Calu3 (cell line): ENCODE measurements at regions of chr14 and their contacts with region 1.

Region 1: DNA sequence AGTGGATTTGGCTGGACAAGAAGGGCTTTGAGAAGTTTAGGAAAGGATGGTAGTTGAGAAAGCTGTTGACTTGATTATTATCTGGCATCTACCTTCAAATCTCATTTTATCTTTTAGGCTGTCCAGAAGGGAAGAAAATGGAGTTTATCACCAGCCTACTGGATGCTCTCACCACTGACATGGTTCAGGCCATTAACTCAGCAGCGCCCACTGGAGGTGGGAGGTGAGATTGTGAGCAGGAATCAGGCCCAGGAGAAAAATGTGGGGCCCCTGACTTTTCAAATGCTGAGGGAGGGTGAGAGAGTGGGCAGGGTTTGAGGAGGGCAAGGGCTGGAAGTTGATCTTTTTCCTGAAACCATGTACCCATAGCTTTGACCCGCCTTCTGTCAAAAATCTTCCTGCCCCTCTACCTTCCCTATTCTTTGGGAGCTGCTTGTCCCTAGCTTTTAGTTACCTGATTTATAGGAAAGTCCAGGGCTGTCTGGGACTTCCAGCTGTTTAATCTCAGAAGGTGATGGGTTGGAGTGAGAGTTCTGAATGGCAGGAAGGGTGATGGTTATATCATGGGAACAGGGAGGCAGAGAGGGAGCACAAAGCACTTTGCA is 134.2 kb downstream of the SMOC1 start:
- DNase-seq: peak; percentile 73
- H3K4me3 Mint-ChIP-seq: no peak overlapping the region
- H3K27ac Mint-ChIP-seq: peak overlapping the region; percentile 28
- H3K4me1 Mint-ChIP-seq: peaks cover 10% of the 10 kb centered on the region
- H3K27me3 Mint-ChIP-seq: no peaks in the 10 kb centered on the region
- CTCF ChIP-seq: peak; percentile 75

Region 2: DNA sequence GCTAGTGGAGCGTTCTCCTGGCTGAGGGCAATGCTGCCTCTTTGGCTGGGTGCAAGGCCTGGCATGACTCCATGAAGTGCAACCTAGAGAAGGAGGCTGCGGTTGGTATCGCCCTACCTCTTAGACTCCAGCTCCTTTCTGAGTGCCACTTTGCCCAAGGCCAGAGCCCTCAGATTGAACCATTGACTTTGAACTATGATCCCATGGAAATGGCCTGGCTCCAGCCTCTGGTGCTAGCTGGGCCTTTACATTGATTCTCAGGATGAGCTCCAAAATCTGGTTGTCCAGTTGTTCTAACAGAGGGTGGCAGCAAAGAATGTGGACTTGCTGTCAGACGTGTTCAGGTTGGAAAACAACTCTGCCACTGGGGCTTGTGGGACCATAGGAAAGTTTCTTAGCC is 150.3 kb before region 1 on chr14:
- CTCF ChIA-PET with region 1: no interaction called
- intact Hi-C with region 1: no loop called
- DNase-seq: no peak
- H3K4me3 Mint-ChIP-seq: no peak overlapping the region
- H3K27ac Mint-ChIP-seq: no peak overlapping the region
- H3K4me1 Mint-ChIP-seq: no peaks in the 10 kb centered on the region
- H3K27me3 Mint-ChIP-seq: peaks cover 38% of the 10 kb centered on the region
- CTCF ChIP-seq: no peak

Region 3: GRCh38 chr14:69879175-69880043 is 134.0 kb before region 1 on chr14 and contains the start of gene SMOC1:
- CTCF ChIA-PET with region 1: interaction called, 6 read pairs
- intact Hi-C with region 1: loop called (anchors 1 kb)
- DNase-seq: peak; percentile 96
- H3K4me3 Mint-ChIP-seq: peak within 1 kb of the TSS; percentile 79
- H3K27ac Mint-ChIP-seq: peak within 1 kb of the TSS; percentile 22
- H3K4me1 Mint-ChIP-seq: peaks cover 40% of the 10 kb centered on the region
- H3K27me3 Mint-ChIP-seq: no peaks in the 10 kb centered on the region
- CTCF ChIP-seq: no peak
- total RNA-seq, gene SMOC1: 21.4 and 39.6 TPM in 2 replicates

Region 4: GRCh38 chr14:69956970-69957369 is 56.4 kb before region 1 on chr14:
- CTCF ChIA-PET with region 1: no interaction called
- intact Hi-C with region 1: no loop called
- DNase-seq: no peak
- H3K4me3 Mint-ChIP-seq: no peak overlapping the region
- H3K27ac Mint-ChIP-seq: no peak overlapping the region
- H3K4me1 Mint-ChIP-seq: no peaks in the 10 kb centered on the region
- H3K27me3 Mint-ChIP-seq: no peaks in the 10 kb centered on the region
- CTCF ChIP-seq: no peak

Region 5: DNA sequence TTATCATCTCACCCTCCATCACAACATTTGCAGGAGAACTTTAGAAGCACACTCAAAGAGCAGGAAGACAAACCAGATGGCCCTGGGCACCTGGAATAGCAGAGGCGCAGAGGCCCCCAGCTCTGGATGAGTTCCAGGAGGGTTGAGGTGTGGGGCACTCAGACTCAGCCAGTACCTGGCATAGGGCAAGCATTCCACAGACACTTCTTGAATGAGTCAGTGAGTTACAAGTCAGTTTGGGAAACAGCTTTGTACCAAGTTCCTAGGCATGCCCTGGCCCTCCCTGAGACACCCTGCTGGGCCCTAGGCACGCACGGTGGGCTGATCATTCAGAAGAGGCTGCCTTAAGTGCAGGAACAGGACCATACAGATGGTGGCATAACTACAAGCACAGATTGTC is 741.6 kb after region 1 on chr14:
- CTCF ChIA-PET with region 1: no interaction called
- intact Hi-C with region 1: no loop called
- DNase-seq: peak; percentile 91
- H3K4me3 Mint-ChIP-seq: peak overlapping the region; percentile 27
- H3K27ac Mint-ChIP-seq: peak overlapping the region; percentile 24
- H3K4me1 Mint-ChIP-seq: peaks cover 42% of the 10 kb centered on the region
- H3K27me3 Mint-ChIP-seq: no peaks in the 10 kb centered on the region
- CTCF ChIP-seq: no peak